GM12878 (cell line): ENCODE measurements at regions of chr3 and their contacts with region 1.

Region 1: GRCh38 chr3:138941259-138941885 is 5.6 kb downstream of the FOXL2 start:
- DNase-seq: no peak
- ATAC-seq: peak; percentile 61
- H3K4me3 ChIP-seq: no peak overlapping the region
- H3K27ac ChIP-seq: no peak overlapping the region
- H3K4me1 ChIP-seq: no peaks in the 10 kb centered on the region
- H3K27me3 ChIP-seq: peaks cover 23 to 53% of the 10 kb centered on the region in 2 experiments
- CTCF ChIP-seq: peak; percentile 42 to 57 (median 46)
- EP300 ChIP-seq: no peak
- POLR2A ChIP-seq: no peak
- RAD21 ChIP-seq: no peak

Region 2: GRCh38 chr3:139101396-139101795 is 160.0 kb after region 1 on chr3:
- CTCF ChIA-PET with region 1: no interaction called
- POLR2A ChIA-PET with region 1: no interaction called
- RAD21 ChIA-PET with region 1: interaction called, 3 read pairs
- SMC1A ChIA-PET with region 1: no interaction called
- in situ Hi-C with region 1: no loop called
- intact Hi-C with region 1: loop called (anchors 10 kb)
- DNase-seq: no peak
- ATAC-seq: no peak
- H3K4me3 ChIP-seq: no peak overlapping the region
- H3K27ac ChIP-seq: no peak overlapping the region
- H3K4me1 ChIP-seq: no peaks in the 10 kb centered on the region
- H3K27me3 ChIP-seq: no peaks in the 10 kb centered on the region
- CTCF ChIP-seq: no peak
- EP300 ChIP-seq: no peak
- POLR2A ChIP-seq: no peak
- RAD21 ChIP-seq: no peak

Region 3: DNA sequence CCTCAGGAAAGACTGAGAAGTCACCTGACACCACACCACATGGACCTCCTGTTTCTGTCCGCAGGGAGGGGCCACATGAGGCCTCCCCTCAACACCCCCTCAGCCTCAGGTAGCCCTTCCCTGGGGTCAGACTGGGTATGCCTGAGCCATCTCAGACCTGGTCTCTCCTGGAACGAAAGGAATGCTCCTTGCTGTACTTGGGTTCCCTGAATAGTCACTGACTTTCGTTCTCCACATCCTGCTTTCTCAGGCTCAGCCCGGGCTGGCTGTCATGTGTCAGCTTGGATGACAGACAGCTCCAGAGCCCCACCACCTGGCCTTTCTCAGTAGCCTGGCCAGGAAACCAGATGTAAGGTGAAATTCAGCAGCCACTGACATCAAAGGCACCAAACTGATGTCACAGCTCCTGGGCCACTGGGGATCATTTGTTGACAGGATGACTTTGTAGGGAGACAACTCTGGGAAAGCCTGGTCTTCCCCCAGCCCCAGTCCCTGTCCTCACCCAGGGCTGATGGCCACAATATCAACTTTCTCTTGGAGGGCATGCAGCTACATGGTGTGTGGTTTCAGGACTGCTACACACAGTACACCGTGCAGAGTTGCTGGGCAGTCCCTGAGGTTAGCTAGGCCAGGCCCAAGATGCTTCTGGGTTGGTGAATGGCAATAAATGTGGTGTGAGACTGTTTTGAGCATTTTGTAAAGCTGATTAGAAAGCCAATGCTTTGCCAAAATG is 261.0 kb after region 1 on chr3:
- CTCF ChIA-PET with region 1: interaction called, 3 read pairs
- POLR2A ChIA-PET with region 1: no interaction called
- RAD21 ChIA-PET with region 1: interaction called, 3 read pairs
- SMC1A ChIA-PET with region 1: interaction called, 4 read pairs
- in situ Hi-C with region 1: no loop called
- intact Hi-C with region 1: loop called (anchors 5 kb)
- DNase-seq: no peak
- ATAC-seq: peak; percentile 82
- H3K4me3 ChIP-seq: no peak overlapping the region
- H3K27ac ChIP-seq: no peak overlapping the region
- H3K4me1 ChIP-seq: peaks cover 5% of the 10 kb centered on the region; the same call in 1 of the 2 replicates
- H3K27me3 ChIP-seq: no peaks in the 10 kb centered on the region
- CTCF ChIP-seq: peak; percentile 15 to 49 (median 27); a peak in 3 of 6 replicates
- EP300 ChIP-seq: no peak
- POLR2A ChIP-seq: no peak
- RAD21 ChIP-seq: peak; percentile 54

Region 4: GRCh38 chr3:139329345-139329850 is 388.0 kb after region 1 on chr3:
- CTCF ChIA-PET with region 1: interaction called, 5 read pairs
- POLR2A ChIA-PET with region 1: no interaction called
- RAD21 ChIA-PET with region 1: interaction called, 5 read pairs
- SMC1A ChIA-PET with region 1: no interaction called
- in situ Hi-C with region 1: loop called (anchors 5 kb)
- intact Hi-C with region 1: loop called (anchors 1 kb)
- DNase-seq: no peak
- ATAC-seq: peak; percentile 100
- H3K4me3 ChIP-seq: peak overlapping the region; percentile 43; the same call in 1 of the 2 replicates
- H3K27ac ChIP-seq: no peak overlapping the region
- H3K4me1 ChIP-seq: no peaks in the 10 kb centered on the region; the same call in 1 of the 2 replicates
- H3K27me3 ChIP-seq: peaks cover 0 to 1% of the 10 kb centered on the region in 2 experiments; a peak in 2 of 4 replicates
- CTCF ChIP-seq: peak; percentile 96 to 100 (median 97)
- EP300 ChIP-seq: no peak
- POLR2A ChIP-seq: no peak
- RAD21 ChIP-seq: peak; percentile 88